Activated naive CD8-positive, alpha-beta T cell treated with anti-CD3 and anti-CD28 coated beads, Interleukin-2, amount 10 ng/mL, durations not matched to agents 7 days and 5 days (primary cell): ENCODE measurements at regions of chr11 and their contacts with region 1.

Region 1: GRCh38 chr11:65497141-65498041 is 1.5 kb upstream of the MALAT1 start:
- DNase-seq: peak; percentile 99
- ATAC-seq: peak; percentile 79
- H3K4me3 Mint-ChIP-seq: no peak overlapping the region
- H3K27ac Mint-ChIP-seq: no peak overlapping the region
- H3K4me1 Mint-ChIP-seq: peaks cover 23% of the 10 kb centered on the region
- H3K27me3 Mint-ChIP-seq: no peaks in the 10 kb centered on the region

Region 2: GRCh38 chr11:65382033-65382807 is 115.2 kb before region 1 on chr11 and contains the start of gene SLC25A45:
- POLR2A ChIA-PET with region 1: interaction called, 32 read pairs
- DNase-seq: peak; percentile 92
- ATAC-seq: peak; percentile 84
- H3K4me3 Mint-ChIP-seq: peak within 1 kb of the TSS; percentile 89
- H3K27ac Mint-ChIP-seq: peak within 1 kb of the TSS; percentile 96
- H3K4me1 Mint-ChIP-seq: peaks cover 34% of the 10 kb centered on the region
- H3K27me3 Mint-ChIP-seq: no peaks in the 10 kb centered on the region
- total RNA-seq, gene SLC25A45: 25.5 to 29.6 TPM

Region 3: DNA sequence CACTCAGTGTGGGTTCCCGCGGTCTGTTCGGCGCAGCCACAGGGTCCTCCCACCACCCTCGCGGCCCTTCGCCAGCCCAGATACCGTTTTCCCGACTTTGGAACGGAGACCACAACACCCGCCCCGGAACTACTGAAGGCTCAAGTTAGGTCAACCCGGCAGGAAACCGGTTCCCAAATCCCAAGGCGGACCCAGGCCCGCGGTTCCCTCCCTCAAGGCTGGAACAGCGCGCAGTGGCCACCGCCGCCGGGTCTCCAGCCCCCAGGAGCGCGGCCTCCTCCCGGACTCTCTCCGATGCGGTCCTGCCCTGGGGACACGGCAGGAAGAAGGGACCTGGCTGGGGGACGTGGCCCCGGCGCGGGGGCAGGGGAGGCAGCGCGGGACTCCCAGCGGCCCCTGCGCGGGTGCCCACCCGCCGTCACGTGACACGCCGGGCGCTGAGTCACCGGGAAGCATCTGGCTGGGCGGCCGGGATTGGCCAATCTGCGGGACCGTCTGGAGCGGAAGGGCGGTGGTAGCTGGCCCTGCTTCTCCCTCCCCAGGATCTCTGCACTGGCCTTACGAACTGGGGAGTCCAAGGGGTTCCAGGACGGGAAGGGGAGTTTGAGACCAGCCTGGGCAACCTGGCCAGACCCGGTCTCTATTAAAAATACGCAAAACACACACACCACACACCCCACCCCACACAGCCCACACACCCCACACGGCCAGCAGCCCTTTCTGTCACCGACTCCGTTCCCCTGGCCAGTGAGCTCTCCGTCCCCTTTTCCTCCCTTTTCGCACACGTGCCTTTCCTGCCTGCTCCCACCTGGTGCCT is 20.0 kb before region 1 on chr11:
- POLR2A ChIA-PET with region 1: interaction called, 686 read pairs
- DNase-seq: peak; percentile 92
- ATAC-seq: peak; percentile 85
- H3K4me3 Mint-ChIP-seq: peak overlapping the region; percentile 100
- H3K27ac Mint-ChIP-seq: peak overlapping the region; percentile 98
- H3K4me1 Mint-ChIP-seq: peaks cover 9% of the 10 kb centered on the region
- H3K27me3 Mint-ChIP-seq: peaks cover 4% of the 10 kb centered on the region

Region 4: DNA sequence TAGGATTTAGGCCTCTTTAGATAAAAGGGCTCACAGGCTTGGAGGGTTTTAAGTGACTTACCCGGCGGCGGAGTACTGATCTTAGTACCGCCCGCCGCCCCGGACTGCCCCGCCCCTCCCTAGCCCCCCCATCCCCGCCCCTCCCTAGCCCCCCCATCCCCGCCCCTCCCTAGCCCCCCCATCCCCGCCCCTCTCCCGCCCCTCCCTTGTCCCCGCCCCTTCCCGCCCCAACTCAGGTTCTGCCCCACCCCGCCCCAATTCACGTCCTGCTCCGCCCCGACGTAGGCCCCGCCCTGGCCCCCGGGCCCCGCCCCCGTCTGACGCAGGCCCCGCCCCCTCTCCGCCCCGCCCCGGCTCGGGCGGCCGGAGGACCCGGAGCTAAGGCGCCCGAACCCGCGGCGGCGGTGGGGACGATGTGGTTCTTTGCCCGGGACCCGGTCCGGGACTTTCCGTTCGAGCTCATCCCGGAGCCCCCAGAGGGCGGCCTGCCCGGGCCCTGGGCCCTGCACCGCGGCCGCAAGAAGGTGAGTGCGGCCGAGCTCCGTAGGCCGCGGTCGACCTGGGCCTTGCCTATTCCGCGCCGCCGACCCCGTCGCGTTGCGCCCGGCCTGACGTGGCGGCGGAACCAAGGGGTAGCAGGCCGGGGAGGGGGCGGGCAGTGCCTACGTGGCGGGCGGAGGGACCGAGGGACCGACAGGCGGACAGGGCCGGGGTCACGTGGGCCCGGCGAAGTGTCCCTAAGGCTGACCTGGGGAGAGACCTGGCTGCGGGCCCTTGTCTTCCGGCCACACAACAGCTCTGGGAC is 27.6 kb after region 1 on chr11 and contains the start of gene SCYL1:
- POLR2A ChIA-PET with region 1: interaction called, 28 read pairs
- DNase-seq: peak; percentile 88
- ATAC-seq: peak; percentile 59
- H3K4me3 Mint-ChIP-seq: peak within 1 kb of the TSS; percentile 87
- H3K27ac Mint-ChIP-seq: peak within 1 kb of the TSS; percentile 93
- H3K4me1 Mint-ChIP-seq: peaks cover 42% of the 10 kb centered on the region
- H3K27me3 Mint-ChIP-seq: no peaks in the 10 kb centered on the region
- total RNA-seq, gene SCYL1: 74.2 to 74.9 TPM